ENCODE measurements at regions of chr20 and their contacts with region 1.

Region 1: DNA sequence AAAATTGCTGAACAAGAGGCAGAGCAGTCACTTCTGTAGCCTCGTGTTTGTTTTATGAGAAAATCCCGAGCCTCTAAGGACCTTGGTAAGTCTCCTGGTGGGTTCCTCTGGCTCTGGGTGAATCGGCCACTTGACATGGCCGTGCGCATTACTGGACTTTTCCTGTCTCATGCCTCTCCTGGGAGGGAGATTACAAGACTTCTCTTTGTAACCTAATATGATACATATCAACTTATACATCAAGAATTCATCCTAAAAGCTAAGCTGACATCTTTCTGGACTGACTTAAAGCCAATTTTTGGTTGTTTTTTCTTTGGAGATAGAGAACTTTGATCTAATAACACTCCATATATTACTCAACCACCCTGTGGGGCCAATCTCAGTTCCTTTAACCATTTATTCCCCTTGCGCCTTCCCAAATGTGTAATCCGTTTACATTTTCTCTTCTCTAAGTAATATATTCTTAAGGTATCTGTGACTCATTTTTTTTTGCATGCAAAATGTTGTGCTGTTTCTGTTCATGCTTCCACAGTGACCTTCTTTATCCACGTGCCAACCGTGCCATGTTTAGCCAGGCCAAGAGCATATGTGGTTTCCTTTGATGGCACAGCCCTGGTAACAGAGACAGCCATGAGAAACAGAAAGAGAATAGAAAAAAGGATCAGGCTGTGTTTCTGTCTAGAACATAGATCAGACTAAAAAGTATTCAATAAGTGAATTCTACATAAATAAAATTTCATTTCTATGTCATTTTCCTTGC is 47.5 kb upstream of the JAG1 start:
- DNase-seq: no peak
- H3K4me3 ChIP-seq: no peak overlapping the region
- H3K27ac ChIP-seq: no peak overlapping the region
- H3K4me1 ChIP-seq: peaks cover 10% of the 10 kb centered on the region; the same call in 1 of the 2 replicates
- H3K27me3 ChIP-seq: no peaks in the 10 kb centered on the region
- CTCF ChIP-seq: no peak

Region 2: GRCh38 chr20:10708351-10709185 is 12.7 kb before region 1 on chr20:
- CTCF ChIA-PET with region 1: interaction called, 14 read pairs
- POLR2A ChIA-PET with region 1: no interaction called
- intact Hi-C with region 1: no loop called
- DNase-seq: peak in 1 of 2 experiments; percentile 79
- H3K4me3 ChIP-seq: 0 out of 2 replicates have a peak overlapping the region, but pooled peaks have one; percentile 0
- H3K27ac ChIP-seq: peak overlapping the region; percentile 57
- H3K4me1 ChIP-seq: peaks cover 47% of the 10 kb centered on the region
- H3K27me3 ChIP-seq: no peaks in the 10 kb centered on the region
- CTCF ChIP-seq: no peak

Region 3: GRCh38 chr20:10739566-10739965 is 18.2 kb after region 1 on chr20:
- CTCF ChIA-PET with region 1: no interaction called
- POLR2A ChIA-PET with region 1: no interaction called
- intact Hi-C with region 1: no loop called
- DNase-seq: peak in 1 of 2 experiments; percentile 32
- H3K4me3 ChIP-seq: no peak overlapping the region
- H3K27ac ChIP-seq: no peak overlapping the region
- H3K4me1 ChIP-seq: 0 out of 2 replicates have a peak, but pooled peaks cover 11% of the 10 kb centered on the region
- H3K27me3 ChIP-seq: no peaks in the 10 kb centered on the region
- CTCF ChIP-seq: no peak

Measured in PC-9 (cell line).